ENCODE measurements at regions of chr1 and their contacts with region 1.

Region 1: DNA sequence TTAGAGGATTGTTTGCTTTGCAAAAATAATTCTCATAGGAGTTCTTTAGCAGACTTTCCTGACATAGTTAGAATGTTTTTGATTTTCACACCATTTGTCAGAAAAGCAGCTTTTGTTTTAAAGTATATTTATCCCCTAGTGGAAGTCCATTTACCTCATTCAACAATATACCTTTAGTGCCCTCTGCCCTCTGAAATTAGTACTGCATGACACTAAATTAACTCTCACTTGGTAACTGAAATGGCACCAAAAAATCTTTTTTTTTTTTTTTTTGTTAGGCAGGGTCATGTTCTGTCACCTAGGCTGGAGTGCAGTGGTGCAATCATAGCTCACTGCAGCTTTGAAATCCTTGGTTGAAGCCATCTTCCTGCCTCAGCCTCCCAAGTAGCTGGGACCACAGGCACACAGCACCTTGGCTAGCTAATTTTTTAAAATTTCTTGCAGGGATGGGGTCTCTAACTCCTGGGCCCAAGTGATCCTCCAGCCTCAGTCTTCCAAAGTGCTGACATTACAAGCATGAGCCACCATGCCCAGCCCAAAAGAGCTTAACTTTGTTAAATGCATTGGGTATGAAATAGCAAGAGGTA is 13.6 kb downstream of the LRRC42 start:
- DNase-seq: peak; percentile 35
- ATAC-seq: peak; percentile 38; the same call in 1 of the 3 replicates
- H3K4me3 ChIP-seq: no peak overlapping the region
- H3K27ac ChIP-seq: no peak overlapping the region
- H3K4me1 ChIP-seq: peaks cover 19% of the 10 kb centered on the region
- H3K27me3 ChIP-seq: no peaks in the 10 kb centered on the region
- CTCF ChIP-seq: peak; percentile 47
- EP300 ChIP-seq: no peak
- POLR2A ChIP-seq: no peak
- RAD21 ChIP-seq: 0 out of 2 replicates have a peak, but pooled peaks have one; percentile 41

Region 2: DNA sequence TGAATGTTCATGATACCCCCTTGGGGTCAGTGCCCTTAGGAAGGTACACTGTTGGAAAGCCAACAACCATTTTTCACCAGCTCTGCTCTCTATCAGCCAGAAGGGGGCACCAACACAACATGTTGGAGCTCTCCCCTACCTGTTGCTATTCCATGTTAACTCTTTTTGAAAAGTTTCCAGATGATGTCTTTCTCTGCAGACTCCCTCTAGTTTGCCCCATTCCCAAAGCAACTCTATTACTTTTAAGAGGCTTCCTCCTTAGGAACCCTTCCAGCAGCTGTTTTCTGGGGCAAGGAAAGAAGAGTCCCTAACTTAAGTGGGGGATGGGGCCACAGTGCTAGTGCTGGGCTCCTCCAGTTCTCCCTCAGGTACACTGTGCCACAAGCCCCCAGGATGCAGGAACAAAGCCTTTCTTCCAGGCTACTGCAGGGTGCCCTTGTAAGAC is 98.8 kb before region 1 on chr1:
- CTCF ChIA-PET with region 1: interaction called, 29 read pairs
- POLR2A ChIA-PET with region 1: no interaction called
- in situ Hi-C with region 1: no loop called
- intact Hi-C with region 1: no loop called
- DNase-seq: peak; percentile 69
- ATAC-seq: peak; percentile 97
- H3K4me3 ChIP-seq: no peak overlapping the region
- H3K27ac ChIP-seq: no peak overlapping the region
- H3K4me1 ChIP-seq: no peaks in the 10 kb centered on the region
- H3K27me3 ChIP-seq: no peaks in the 10 kb centered on the region
- CTCF ChIP-seq: peak; percentile 90
- EP300 ChIP-seq: no peak
- POLR2A ChIP-seq: no peak
- RAD21 ChIP-seq: peak; percentile 76; the same call in 1 of the 2 replicates

Region 3: DNA sequence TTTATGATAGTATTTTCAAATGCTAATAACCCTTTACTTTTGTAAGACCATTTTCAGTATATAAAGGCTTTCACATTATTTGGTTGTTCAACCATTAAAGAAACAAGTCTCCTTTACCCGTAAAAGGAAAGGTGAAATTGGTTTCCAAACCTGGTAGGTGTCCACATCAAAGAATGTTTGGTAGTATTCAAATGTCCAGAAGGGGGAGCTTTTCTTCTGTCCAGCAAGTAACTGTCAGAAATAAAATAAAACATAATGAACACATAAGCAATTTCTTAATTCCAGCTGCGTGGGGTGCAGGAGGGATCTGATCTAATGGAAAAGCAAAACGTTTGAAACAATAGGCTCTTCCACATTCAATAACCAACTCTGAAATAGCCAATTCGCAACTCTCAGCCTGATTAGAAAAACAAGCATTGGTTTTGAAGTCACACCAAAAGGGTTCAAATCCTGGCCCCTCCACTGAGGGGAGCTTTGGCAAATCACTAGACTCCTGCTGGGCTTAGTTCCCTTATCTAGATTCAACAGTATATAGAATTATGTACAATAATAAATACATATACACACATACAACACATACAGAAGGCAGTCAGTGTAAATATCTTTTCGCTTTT is 81.2 kb before region 1 on chr1:
- CTCF ChIA-PET with region 1: interaction called, 25 read pairs
- POLR2A ChIA-PET with region 1: interaction called, 3 read pairs
- in situ Hi-C with region 1: no loop called
- intact Hi-C with region 1: no loop called
- DNase-seq: peak; percentile 57
- ATAC-seq: no peak
- H3K4me3 ChIP-seq: no peak overlapping the region
- H3K27ac ChIP-seq: no peak overlapping the region
- H3K4me1 ChIP-seq: no peaks in the 10 kb centered on the region
- H3K27me3 ChIP-seq: no peaks in the 10 kb centered on the region
- CTCF ChIP-seq: peak; percentile 67
- EP300 ChIP-seq: no peak
- POLR2A ChIP-seq: no peak
- RAD21 ChIP-seq: peak; percentile 49; the same call in 1 of the 2 replicates

Measured in HepG2 (cell line).